ENCODE measurements at regions of chrX and their contacts with region 1.

Region 1: GRCh38 chrX:915427-916229 is 285.0 kb downstream of the SHOX start:
- DNase-seq: peak in 6 of 9 donors; percentile 18 to 63 (median 43)
- ATAC-seq: peak; percentile 50
- H3K4me3 ChIP-seq: no peak overlapping the region
- H3K4me3 Mint-ChIP-seq: no peak overlapping the region
- H3K27ac ChIP-seq: no peak overlapping the region
- H3K27ac Mint-ChIP-seq: no peak overlapping the region
- H3K4me1 ChIP-seq: no peaks in the 10 kb centered on the region
- H3K4me1 Mint-ChIP-seq: no peaks in the 10 kb centered on the region
- H3K27me3 ChIP-seq: no peaks in the 10 kb centered on the region
- H3K27me3 Mint-ChIP-seq: peaks cover 0 to 6% (median 0%) of the 10 kb centered on the region in 5 donors

Region 2: DNA sequence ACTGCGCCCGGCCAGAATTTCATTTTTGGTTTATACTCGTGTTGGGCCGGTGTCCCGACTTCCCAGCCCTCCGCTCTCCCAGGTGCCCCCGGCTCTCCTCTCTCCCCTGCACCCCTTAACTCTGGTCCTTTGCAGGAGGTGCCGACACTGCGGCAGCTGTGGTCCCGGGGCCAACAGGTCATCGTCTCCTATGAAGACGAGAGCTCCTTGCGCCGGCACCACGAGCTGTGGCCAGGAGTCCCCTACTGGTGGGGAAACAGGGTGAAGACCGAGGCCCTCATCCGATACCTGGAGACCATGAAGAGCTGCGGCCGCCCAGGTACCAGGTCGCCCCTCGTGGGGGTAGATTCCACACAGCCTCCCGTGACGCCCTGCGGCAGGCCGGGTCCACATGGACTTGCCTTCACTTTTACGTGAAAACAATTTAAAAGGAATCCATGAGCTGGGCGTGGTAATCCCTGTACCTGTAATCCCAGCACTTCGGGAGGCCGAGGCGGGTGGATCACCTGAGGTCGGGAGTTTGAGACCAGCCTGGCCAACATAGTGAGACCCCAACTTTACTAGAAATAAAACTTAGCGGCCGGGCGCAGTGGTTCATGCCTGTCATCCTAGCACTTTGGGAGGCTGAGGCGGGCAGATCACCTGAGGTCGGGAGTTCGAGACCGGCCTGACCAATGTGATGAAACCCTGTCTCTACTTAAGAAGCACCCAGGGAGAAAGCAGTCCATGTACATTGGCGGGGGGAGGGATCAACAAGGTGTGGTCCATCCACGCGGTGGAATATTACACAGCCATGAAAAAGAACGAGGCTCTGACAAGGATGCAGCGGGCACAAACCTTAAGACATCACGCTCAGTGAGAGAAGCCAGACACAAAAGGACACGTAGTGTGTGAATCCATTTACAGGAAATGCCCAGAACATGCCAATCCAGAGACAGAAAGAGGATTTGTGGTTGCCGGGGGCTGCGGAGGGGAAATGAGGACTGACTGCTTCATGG is 622.4 kb before region 1 on chrX:
- CTCF ChIA-PET with region 1: no interaction called
- POLR2A ChIA-PET with region 1: no interaction called
- intact Hi-C with region 1: no loop called
- DNase-seq: peak in 1 of 9 donors; percentile 17
- ATAC-seq: no peak
- H3K4me3 ChIP-seq: no peak overlapping the region
- H3K4me3 Mint-ChIP-seq: no peak overlapping the region
- H3K27ac ChIP-seq: no peak overlapping the region
- H3K27ac Mint-ChIP-seq: peak overlapping the region in 1 of 9 donors; percentile 54
- H3K4me1 ChIP-seq: no peaks in the 10 kb centered on the region
- H3K4me1 Mint-ChIP-seq: no peaks in the 10 kb centered on the region
- H3K27me3 ChIP-seq: no peaks in the 10 kb centered on the region
- H3K27me3 Mint-ChIP-seq: no peaks in the 10 kb centered on the region

Region 3: GRCh38 chrX:903116-903515 is 12.5 kb before region 1 on chrX:
- CTCF ChIA-PET with region 1: no interaction called
- POLR2A ChIA-PET with region 1: no interaction called
- intact Hi-C with region 1: no loop called
- DNase-seq: no peak
- ATAC-seq: no peak
- H3K4me3 ChIP-seq: no peak overlapping the region
- H3K4me3 Mint-ChIP-seq: no peak overlapping the region
- H3K27ac ChIP-seq: no peak overlapping the region
- H3K27ac Mint-ChIP-seq: no peak overlapping the region
- H3K4me1 ChIP-seq: no peaks in the 10 kb centered on the region
- H3K4me1 Mint-ChIP-seq: no peaks in the 10 kb centered on the region
- H3K27me3 ChIP-seq: no peaks in the 10 kb centered on the region
- H3K27me3 Mint-ChIP-seq: peaks cover 0 to 4% (median 4%) of the 10 kb centered on the region in 5 donors

Region 4: GRCh38 chrX:928606-929005 is 13.0 kb after region 1 on chrX:
- CTCF ChIA-PET with region 1: no interaction called
- POLR2A ChIA-PET with region 1: no interaction called
- intact Hi-C with region 1: no loop called
- DNase-seq: no peak
- ATAC-seq: no peak
- H3K4me3 ChIP-seq: no peak overlapping the region
- H3K4me3 Mint-ChIP-seq: no peak overlapping the region
- H3K27ac ChIP-seq: no peak overlapping the region
- H3K27ac Mint-ChIP-seq: no peak overlapping the region
- H3K4me1 ChIP-seq: no peaks in the 10 kb centered on the region
- H3K4me1 Mint-ChIP-seq: no peaks in the 10 kb centered on the region
- H3K27me3 ChIP-seq: no peaks in the 10 kb centered on the region
- H3K27me3 Mint-ChIP-seq: no peaks in the 10 kb centered on the region

Region 5: GRCh38 chrX:1072637-1073377 is 157.2 kb after region 1 on chrX:
- CTCF ChIA-PET with region 1: no interaction called
- POLR2A ChIA-PET with region 1: no interaction called
- intact Hi-C with region 1: loop called in 1 of 2 experiments (anchors 10 kb)
- DNase-seq: no peak
- ATAC-seq: no peak
- H3K4me3 ChIP-seq: no peak overlapping the region
- H3K4me3 Mint-ChIP-seq: peak overlapping the region in 1 of 10 donors; percentile 16
- H3K27ac ChIP-seq: no peak overlapping the region
- H3K27ac Mint-ChIP-seq: peak overlapping the region in 2 of 9 donors; percentile 5 to 13
- H3K4me1 ChIP-seq: no peaks in the 10 kb centered on the region
- H3K4me1 Mint-ChIP-seq: peaks cover 0 to 10% (median 9%) of the 10 kb centered on the region in 7 donors
- H3K27me3 ChIP-seq: no peaks in the 10 kb centered on the region
- H3K27me3 Mint-ChIP-seq: peaks cover 7 to 16% (median 10%) of the 10 kb centered on the region in 5 donors

Region 6: GRCh38 chrX:1178580-1179057 is 263.0 kb after region 1 on chrX:
- CTCF ChIA-PET with region 1: no interaction called
- POLR2A ChIA-PET with region 1: no interaction called
- intact Hi-C with region 1: loop called in 1 of 2 experiments (anchors 10 kb)
- DNase-seq: peak in 6 of 9 donors; percentile 34 to 73 (median 49)
- ATAC-seq: no peak
- H3K4me3 ChIP-seq: no peak overlapping the region
- H3K4me3 Mint-ChIP-seq: peak overlapping the region in 2 of 10 donors; percentile 15 to 45
- H3K27ac ChIP-seq: no peak overlapping the region
- H3K27ac Mint-ChIP-seq: peak overlapping the region in 2 of 9 donors; percentile 32 to 76
- H3K4me1 ChIP-seq: no peaks in the 10 kb centered on the region
- H3K4me1 Mint-ChIP-seq: no peaks in the 10 kb centered on the region
- H3K27me3 ChIP-seq: no peaks in the 10 kb centered on the region
- H3K27me3 Mint-ChIP-seq: peaks cover 0 to under 1% (median 0%) of the 10 kb centered on the region in 5 donors